Lower lobe of right lung (tissue), 2 donors: ENCODE measurements at regions of chr5 and their contacts with region 1.

Region 1: GRCh38 chr5:59506285-59506877 is 387.1 kb downstream of the PDE4D start:
- DNase-seq: no peak
- ATAC-seq: peak in 1 of 2 donors; percentile 46
- H3K4me3 ChIP-seq: no peak overlapping the region
- H3K27ac ChIP-seq: no peak overlapping the region
- H3K4me1 ChIP-seq: no peaks in the 10 kb centered on the region
- H3K27me3 ChIP-seq: no peaks in the 10 kb centered on the region
- CTCF ChIP-seq: peak; percentile 43

Region 2: DNA sequence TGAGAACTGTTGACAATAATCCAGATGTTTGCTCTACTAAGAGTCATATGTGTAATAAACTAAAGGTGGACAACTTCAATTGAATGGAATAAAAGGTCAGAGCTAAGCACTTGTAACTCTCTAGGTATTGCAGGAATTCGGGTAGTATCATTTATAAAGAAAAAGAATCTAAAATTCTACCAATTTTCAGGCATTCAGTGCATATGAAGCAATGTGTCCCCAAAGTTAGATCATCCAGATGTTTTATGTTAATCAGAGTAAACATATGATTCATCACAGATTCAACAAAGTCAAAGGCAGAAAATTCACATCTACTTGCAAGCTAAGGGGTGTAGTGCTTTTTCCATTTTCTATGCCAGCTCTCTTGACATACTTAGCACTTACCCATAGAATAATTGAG is 89.9 kb before region 1 on chr5:
- intact Hi-C with region 1: no loop called
- DNase-seq: no peak
- ATAC-seq: no peak
- H3K4me3 ChIP-seq: no peak overlapping the region
- H3K27ac ChIP-seq: no peak overlapping the region
- H3K4me1 ChIP-seq: no peaks in the 10 kb centered on the region
- H3K27me3 ChIP-seq: no peaks in the 10 kb centered on the region
- CTCF ChIP-seq: no peak

Region 3: DNA sequence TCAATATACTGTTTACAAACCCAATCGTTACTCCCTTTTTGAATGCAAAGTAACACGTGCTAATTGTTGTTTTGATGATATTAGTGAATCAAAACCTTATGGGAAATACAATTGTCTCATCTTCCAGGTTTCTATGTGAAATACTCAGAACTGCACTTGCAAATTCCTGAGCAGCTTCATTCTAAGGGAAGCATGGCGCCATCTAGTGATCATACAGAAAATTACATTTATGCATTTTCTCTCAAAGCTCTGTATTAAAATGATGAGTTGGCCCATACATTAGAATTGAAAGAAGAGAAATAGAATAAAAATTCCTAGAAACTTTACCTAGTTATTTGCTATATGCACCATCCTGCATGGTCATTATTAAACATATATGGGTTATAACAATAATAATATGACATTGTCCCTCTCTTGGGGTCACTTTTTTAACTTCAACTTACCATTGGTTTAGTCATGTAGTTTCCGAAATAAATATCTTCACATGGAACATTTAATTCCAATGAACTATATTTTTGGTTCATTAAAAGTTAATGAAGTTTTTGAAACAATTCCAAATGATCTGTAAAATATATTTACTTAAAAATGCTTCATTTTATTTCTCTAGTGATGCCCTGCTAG is 167.2 kb after region 1 on chr5:
- intact Hi-C with region 1: loop called (anchors 10 kb)
- DNase-seq: no peak
- ATAC-seq: peak; percentile 51 to 61
- H3K4me3 ChIP-seq: no peak overlapping the region
- H3K27ac ChIP-seq: no peak overlapping the region
- H3K4me1 ChIP-seq: peaks cover 6% of the 10 kb centered on the region
- H3K27me3 ChIP-seq: no peaks in the 10 kb centered on the region
- CTCF ChIP-seq: peak; percentile 76

Region 4: GRCh38 chr5:59768152-59769040 is 262.0 kb after region 1 on chr5:
- intact Hi-C with region 1: no loop called
- DNase-seq: peak; percentile 76
- ATAC-seq: peak; percentile 74 to 77
- H3K4me3 ChIP-seq: peak overlapping the region; percentile 55
- H3K27ac ChIP-seq: peak overlapping the region; percentile 43
- H3K4me1 ChIP-seq: peaks cover 17% of the 10 kb centered on the region
- H3K27me3 ChIP-seq: no peaks in the 10 kb centered on the region
- CTCF ChIP-seq: no peak